ENCODE measurements at regions of chr14 and their contacts with region 1.

Region 1: DNA sequence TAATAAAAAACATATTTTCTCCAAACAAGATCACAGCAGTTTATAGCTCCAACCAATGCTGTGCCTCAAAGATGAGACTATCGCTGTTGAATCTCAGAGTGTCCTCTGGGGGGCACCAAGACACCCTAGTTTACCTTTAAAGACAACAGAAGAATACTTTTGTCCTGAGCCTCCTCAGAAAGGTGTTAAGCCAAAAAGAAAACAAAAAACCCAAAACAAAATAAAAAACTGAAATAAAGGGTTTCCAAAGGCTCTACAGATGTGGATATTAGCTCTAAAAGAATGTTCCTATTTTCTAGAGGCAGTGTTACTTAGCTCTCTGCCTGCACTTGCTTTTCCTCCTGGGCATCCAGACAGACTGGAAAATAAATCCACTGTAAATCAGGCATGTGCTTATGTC is 86.9 kb upstream of the TTC7B start:
- DNase-seq: peak; percentile 71
- H3K4me3 ChIP-seq: no peak overlapping the region
- H3K27ac ChIP-seq: no peak overlapping the region
- H3K4me1 ChIP-seq: no peaks in the 10 kb centered on the region
- H3K27me3 ChIP-seq: no peaks in the 10 kb centered on the region
- CTCF ChIP-seq: peak; percentile 35 to 60 (median 51)
- POLR2A ChIP-seq: no peak

Region 2: DNA sequence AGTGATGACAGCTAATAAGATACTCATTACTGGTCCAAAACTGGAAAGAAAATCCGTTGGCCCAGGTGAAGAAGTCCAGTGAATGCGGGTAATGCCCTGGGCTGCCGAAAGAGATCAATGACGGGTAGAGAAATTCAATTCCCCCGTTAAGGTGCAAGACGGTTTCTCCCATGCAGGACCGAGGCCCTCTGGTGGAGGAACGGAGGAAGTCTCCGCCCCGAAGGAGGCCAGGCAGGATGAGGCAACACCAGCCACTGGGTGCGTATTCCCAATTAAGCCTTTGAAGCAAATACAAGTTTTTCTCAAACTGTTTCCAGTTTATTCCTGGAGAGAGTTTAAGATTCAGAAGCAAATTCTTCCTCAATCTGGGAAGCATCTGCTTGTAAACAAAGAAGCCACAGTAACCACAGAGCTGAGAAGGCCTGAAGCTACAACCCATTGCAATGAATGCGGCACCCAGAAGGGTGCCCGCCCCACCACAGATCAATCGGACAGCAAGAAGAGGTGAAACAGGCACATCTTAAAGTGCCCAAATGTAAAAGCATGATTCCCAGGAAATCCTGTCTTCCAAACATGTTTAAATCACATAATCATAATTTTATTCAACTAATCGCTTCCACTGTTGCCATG is 205.4 kb before region 1 on chr14:
- intact Hi-C with region 1: no loop called
- DNase-seq: peak; percentile 89
- H3K4me3 ChIP-seq: no peak overlapping the region
- H3K27ac ChIP-seq: peak overlapping the region; percentile 26 to 47
- H3K4me1 ChIP-seq: peaks cover 4% of the 10 kb centered on the region
- H3K27me3 ChIP-seq: no peaks in the 10 kb centered on the region
- CTCF ChIP-seq: peak; percentile 91 to 94 (median 93)
- POLR2A ChIP-seq: no peak

Region 3: DNA sequence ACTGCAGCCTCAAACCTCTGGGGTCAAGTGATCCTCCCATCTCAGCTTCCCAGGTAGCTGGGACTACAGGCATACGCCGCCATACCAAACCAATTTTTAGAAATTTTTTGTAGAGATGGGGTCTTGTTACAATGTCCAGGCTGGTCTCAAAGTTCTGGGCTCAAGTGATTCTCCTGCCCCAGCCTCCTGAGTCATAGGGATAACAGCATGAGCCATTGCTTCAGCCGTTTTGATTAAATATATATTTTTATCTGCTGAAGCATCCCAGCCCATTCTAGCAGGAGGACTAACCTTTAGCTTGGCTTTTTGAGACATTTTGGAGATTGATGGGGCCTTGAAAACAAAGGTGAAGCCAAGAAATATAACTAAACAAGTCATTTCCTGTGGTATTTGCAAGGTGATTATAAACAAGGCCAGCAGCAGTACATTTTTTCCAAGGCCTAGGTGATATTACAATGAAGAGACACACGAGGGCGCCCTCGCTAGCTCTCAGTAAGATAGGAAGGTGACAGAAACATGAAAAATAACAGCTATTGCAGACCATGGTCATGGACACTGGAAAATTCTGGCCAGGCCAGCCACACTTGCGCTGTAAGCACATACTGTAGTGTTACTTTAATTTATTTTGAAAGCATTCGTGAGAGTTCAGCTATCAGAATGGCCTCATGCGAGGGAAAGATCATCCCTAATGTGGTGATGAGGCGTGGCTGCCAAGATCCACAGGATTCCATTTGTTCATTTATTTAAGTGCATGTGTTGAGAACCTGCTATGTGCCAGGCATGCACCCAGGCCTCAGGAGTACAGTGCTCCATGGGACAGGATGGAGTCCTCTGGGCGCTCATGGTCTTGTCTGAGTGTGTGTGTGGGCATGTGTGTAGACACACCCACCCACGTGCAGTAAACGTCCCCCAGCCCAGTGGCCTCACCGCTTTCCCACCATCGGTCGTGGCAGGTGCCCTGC is 274.3 kb after region 1 on chr14:
- intact Hi-C with region 1: loop called (anchors 10 kb)
- DNase-seq: peak; percentile 70
- H3K4me3 ChIP-seq: no peak overlapping the region
- H3K27ac ChIP-seq: no peak overlapping the region
- H3K4me1 ChIP-seq: no peaks in the 10 kb centered on the region
- H3K27me3 ChIP-seq: no peaks in the 10 kb centered on the region
- CTCF ChIP-seq: peak; percentile 31 to 72 (median 60)
- POLR2A ChIP-seq: no peak

Region 4: GRCh38 chr14:91286530-91286937 is 383.4 kb after region 1 on chr14:
- intact Hi-C with region 1: loop called (anchors 10 kb)
- DNase-seq: peak; percentile 87
- H3K4me3 ChIP-seq: no peak overlapping the region
- H3K27ac ChIP-seq: no peak overlapping the region
- H3K4me1 ChIP-seq: peaks cover 11% of the 10 kb centered on the region
- H3K27me3 ChIP-seq: no peaks in the 10 kb centered on the region
- CTCF ChIP-seq: peak; percentile 90 to 96 (median 95)
- POLR2A ChIP-seq: no peak

Measured in testis (tissue), 5 donors.